Heart right ventricle (tissue), 16 donors: ENCODE measurements at regions of chr5 and their contacts with region 1.

Region 1: GRCh38 chr5:180860887-180861822 is at the start of gene ZFP62:
- DNase-seq: peak; percentile 91 to 93
- ATAC-seq: peak; percentile 97 to 99 (median 98)
- H3K4me3 ChIP-seq: peak within 1 kb of the TSS; percentile 76 to 99 (median 96)
- H3K27ac ChIP-seq: peak within 1 kb of the TSS; percentile 91 to 97 (median 94)
- H3K4me1 ChIP-seq: peaks cover 6 to 22% (median 15%) of the 10 kb centered on the region in 9 donors
- H3K27me3 ChIP-seq: peaks cover 0 to 3% (median 0%) of the 10 kb centered on the region in 7 donors
- CTCF ChIP-seq: peak in 3 of 9 donors; percentile 4 to 23 (median 7)
- total RNA-seq, gene ZFP62: 11.3 to 17.6 (median 13.6) TPM

Region 2: GRCh38 chr5:180802325-180803180 is 58.6 kb before region 1 on chr5 and contains the start of gene MGAT1:
- intact Hi-C with region 1: loop called in 5 of 10 experiments (anchors 2 to 10 kb)
- DNase-seq: peak; percentile 91 to 92
- ATAC-seq: peak; percentile 81 to 95 (median 90)
- H3K4me3 ChIP-seq: peak within 1 kb of the TSS; percentile 69 to 100 (median 99)
- H3K27ac ChIP-seq: peak within 1 kb of the TSS; percentile 98 to 100 (median 99)
- H3K4me1 ChIP-seq: peaks cover 23 to 93% (median 89%) of the 10 kb centered on the region in 9 donors
- H3K27me3 ChIP-seq: no peaks in the 10 kb centered on the region
- CTCF ChIP-seq: no peak
- total RNA-seq, gene MGAT1: 50.1 to 118 (median 59.7) TPM

Region 3: GRCh38 chr5:180810210-180810958 is 50.8 kb before region 1 on chr5:
- intact Hi-C with region 1: loop called in 4 of 10 experiments (anchors 2 to 5 kb)
- DNase-seq: peak; percentile 97 to 98
- ATAC-seq: peak; percentile 94 to 98 (median 96)
- H3K4me3 ChIP-seq: peak overlapping the region; percentile 45 to 79 (median 76)
- H3K27ac ChIP-seq: peak overlapping the region; percentile 97 to 100 (median 99)
- H3K4me1 ChIP-seq: peaks cover 19 to 85% (median 62%) of the 10 kb centered on the region in 9 donors
- H3K27me3 ChIP-seq: no peaks in the 10 kb centered on the region
- CTCF ChIP-seq: no peak

Region 4: GRCh38 chr5:180816608-180817534 is 44.3 kb before region 1 on chr5:
- intact Hi-C with region 1: loop called in 3 of 10 experiments (anchors 5 kb)
- DNase-seq: peak; percentile 64 to 86
- ATAC-seq: peak; percentile 52 to 91 (median 84)
- H3K4me3 ChIP-seq: peak overlapping the region in 1 of 10 donors; percentile 76
- H3K27ac ChIP-seq: peak overlapping the region; percentile 55 to 91 (median 86)
- H3K4me1 ChIP-seq: peaks cover 8 to 95% (median 66%) of the 10 kb centered on the region in 9 donors
- H3K27me3 ChIP-seq: no peaks in the 10 kb centered on the region
- CTCF ChIP-seq: peak in 3 of 9 donors; percentile 17 to 32 (median 22)

Region 5: DNA sequence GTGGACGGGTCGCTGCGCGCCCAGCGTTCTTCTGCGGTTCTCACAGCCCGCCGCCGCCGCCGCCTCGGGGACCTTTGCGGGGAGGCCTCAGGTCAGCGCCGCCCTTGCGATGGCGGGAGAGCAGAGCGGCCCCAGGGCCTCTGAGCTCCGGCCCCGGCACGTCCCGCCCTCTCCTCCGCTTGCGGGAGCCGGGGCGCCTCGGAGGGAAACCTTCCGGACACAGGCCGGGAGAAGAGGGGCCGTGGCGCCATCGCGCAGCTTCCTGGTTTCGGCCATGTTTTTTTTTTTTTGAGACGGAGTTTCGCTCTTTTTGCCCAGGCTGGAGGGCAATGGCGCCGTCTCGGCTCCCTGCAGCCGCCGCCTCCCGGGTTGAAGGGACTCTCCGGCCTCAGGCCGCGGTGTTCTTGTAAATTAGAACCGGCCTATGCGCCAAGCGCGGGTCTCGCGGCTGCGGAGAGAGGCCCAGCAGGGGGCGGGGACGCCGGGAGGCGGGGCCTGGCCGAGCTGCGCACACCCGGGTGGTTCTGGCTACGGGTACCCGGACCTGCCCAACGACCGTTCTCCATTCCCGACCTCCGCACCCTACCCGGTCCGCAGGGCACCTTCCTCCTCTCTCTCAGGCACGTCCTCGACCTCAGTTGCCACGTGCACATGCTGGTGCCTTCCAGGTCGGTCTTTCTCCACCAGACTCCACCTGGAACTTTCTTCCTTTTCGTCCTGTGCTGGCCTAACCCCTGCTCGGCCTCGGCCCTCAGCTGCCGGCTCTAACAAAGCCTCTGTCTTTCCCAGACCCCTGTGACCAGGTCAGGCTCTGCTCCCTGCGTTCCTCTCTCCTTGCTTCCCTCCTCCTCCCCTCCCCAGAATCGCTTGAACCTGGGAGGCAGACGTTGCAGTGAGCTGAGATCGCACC is 29.8 kb before region 1 on chr5:
- intact Hi-C with region 1: loop called in 2 of 10 experiments (anchors 2 kb)
- DNase-seq: peak; percentile 88 to 90
- ATAC-seq: peak; percentile 97 to 99 (median 98)
- H3K4me3 ChIP-seq: peak overlapping the region; percentile 39 to 98 (median 92)
- H3K27ac ChIP-seq: peak overlapping the region; percentile 96 to 100 (median 99)
- H3K4me1 ChIP-seq: peaks cover 5 to 53% (median 37%) of the 10 kb centered on the region in 9 donors
- H3K27me3 ChIP-seq: no peaks in the 10 kb centered on the region
- CTCF ChIP-seq: peak in 6 of 9 donors; percentile 13 to 47 (median 36)

Region 6: DNA sequence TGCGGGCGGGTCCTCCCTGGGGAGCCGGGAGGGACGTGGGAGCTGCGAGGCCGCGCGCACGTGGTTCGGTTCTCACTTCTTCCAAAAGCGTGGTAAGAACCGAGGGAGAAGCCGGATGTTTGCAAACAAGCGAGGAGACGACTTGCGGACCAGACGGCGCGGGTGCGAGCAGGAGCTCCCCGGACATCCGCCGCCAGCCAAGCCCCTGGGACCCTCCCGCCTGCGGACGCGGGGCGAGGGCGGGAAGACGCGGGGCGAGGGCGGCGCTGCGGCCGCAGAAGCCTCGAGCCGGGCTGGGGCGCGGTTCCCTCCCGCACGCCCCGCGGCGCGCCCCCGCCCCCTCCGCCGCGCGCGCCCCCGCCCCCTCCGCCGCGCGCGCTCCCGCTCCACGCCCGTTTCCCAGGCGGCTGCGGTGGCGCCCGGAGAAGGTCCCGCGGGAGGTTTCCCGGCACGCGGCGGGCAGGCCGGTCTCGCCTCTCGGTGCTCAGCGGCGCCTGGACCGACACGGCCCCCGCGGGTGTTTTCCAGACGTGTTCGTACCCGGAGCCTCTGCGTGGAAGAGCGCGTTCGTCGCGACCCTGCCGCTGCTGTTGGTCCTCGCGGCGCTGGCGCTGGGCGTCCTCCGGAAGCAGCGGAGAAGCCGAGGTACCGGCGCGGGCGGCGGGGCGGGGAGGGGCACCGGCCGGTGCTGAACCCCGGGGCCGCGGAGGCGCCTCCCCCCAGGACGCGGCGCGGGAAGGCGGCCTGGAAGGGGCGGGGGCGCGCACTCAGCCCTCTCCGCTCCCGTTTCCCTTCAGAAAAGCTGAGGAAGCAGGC is 191.7 kb after region 1 on chr5:
- intact Hi-C with region 1: loop called in 1 of 10 experiments (anchors 10 kb)
- DNase-seq: peak; percentile 36 to 38
- ATAC-seq: peak in 7 of 8 donors; percentile 38 to 65 (median 48)
- H3K4me3 ChIP-seq: peak overlapping the region; percentile 40 to 68 (median 54)
- H3K27ac ChIP-seq: peak overlapping the region; percentile 65 to 92 (median 82)
- H3K4me1 ChIP-seq: peaks cover 0 to 61% (median 32%) of the 10 kb centered on the region in 9 donors
- H3K27me3 ChIP-seq: peaks cover 13 to 96% (median 89%) of the 10 kb centered on the region in 7 donors
- CTCF ChIP-seq: no peak

Region 7: DNA sequence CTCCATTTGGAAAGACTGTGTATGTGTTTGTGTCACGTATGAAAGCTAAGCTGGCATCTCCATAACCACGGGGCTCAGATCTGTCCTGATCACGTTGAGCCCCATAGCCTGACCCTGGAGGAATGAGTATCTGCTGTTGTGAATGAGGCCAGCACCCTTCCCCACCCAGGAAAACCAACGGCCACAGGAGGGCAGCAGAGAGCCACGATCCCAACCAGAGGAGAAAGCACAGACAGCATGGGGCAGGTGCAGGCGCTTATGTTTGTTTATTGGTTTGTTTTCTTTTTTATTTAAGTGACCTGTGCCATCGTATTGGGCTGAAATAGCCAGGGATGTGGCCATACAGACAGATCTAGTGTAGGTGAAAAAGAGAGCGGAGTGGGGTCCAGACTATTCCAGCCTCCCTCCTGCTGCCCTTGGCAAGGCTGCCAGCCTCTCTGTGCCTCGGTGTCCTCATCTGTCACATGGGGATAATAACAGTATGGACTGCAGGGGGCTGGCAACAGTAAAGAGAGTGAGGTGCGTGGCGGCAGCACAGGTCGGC is 298.2 kb after region 1 on chr5:
- intact Hi-C with region 1: loop called in 5 of 10 experiments (anchors 5 to 10 kb)
- DNase-seq: peak; percentile 82 to 88
- ATAC-seq: peak; percentile 85 to 96 (median 90)
- H3K4me3 ChIP-seq: no peak overlapping the region
- H3K27ac ChIP-seq: no peak overlapping the region
- H3K4me1 ChIP-seq: peaks cover 0 to 15% (median 5%) of the 10 kb centered on the region in 9 donors
- H3K27me3 ChIP-seq: peaks cover 0 to 41% (median 6%) of the 10 kb centered on the region in 7 donors
- CTCF ChIP-seq: peak; percentile 69 to 93 (median 87)